ENCODE measurements at regions of chr2 and their contacts with region 1.

Region 1: DNA sequence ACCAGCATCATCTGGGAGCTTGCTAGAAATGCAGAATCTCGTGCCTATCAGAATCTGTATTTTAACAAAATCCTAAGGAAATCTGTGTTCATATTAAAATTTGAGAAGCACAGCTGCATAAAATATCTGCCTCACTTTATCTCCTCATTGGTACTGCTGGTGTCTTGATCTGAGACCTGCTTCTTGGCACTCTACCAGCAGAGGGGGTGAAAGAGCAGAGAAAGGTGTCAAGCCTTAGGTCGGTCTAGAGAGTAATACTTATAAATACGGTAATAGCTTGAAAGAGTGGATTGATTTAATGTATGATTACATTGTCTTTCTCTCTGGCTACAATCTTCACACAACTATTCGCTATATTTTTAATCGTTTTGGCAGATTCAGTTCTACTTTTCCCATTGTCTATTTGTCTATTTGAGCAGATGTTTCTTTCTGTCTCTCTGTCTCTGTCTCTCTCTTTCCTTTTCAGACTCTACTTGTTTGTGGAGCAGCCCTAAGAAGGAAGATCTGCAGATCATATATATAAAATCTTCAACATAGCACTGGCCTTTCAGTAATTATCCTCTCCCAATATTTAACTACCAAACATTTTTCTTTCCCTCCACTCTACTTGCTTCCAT is 1.7 kb upstream of the GCG start:
- H3K4me3 Mint-ChIP-seq: no peak overlapping the region
- H3K27ac Mint-ChIP-seq: no peak overlapping the region
- H3K4me1 Mint-ChIP-seq: peaks cover 6% of the 10 kb centered on the region
- H3K27me3 Mint-ChIP-seq: peaks cover 7% of the 10 kb centered on the region

Region 2: DNA sequence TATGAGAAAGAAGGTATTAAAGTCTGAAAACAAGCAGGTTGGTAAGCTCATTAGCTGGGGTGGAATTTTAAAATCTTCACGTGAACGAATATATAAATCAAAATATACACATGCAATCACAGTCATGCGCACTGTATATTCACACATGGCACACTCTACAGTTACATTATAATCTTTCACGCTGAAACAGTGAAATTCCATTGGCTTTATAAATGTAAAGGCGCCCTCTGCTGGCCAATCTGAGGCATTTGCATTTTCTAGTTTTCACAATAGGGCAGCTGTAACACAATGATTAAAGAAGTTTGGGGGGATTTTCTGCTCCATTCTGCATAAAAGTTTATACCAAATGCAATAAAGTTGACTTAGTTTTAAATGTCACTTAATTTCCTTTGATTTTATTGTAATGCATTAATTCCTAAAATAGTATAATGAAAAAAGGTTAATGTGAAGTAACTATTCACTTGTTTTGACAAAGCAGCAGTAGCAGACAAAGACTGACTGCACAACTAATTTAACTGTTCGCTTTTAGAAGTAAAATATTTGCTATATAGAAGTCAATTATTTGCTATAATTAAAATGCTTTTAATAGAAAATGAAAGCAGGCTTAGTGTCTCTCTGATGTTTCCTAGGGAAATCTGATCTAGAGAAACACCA is 147.6 kb after region 1 on chr2:
- intact Hi-C with region 1: loop called (anchors 1 kb)
- H3K4me3 Mint-ChIP-seq: no peak overlapping the region
- H3K27ac Mint-ChIP-seq: no peak overlapping the region
- H3K4me1 Mint-ChIP-seq: no peaks in the 10 kb centered on the region
- H3K27me3 Mint-ChIP-seq: no peaks in the 10 kb centered on the region

Measured in dendritic cell treated with granulocyte-macrophage colony-stimulating factor and Interleukin-4, amounts not matched to agents 40 ng/mL and 50 ng/mL, for 4 days (primary cell).